Right ventricle myocardium inferior (tissue), 1 donor: ENCODE measurements at regions of chr11 and their contacts with region 1.

Region 1: GRCh38 chr11:76152086-76152681 is 54.1 kb downstream of the WNT11 start:
- DNase-seq: peak; percentile 95
- ATAC-seq: peak; percentile 91

Region 2: DNA sequence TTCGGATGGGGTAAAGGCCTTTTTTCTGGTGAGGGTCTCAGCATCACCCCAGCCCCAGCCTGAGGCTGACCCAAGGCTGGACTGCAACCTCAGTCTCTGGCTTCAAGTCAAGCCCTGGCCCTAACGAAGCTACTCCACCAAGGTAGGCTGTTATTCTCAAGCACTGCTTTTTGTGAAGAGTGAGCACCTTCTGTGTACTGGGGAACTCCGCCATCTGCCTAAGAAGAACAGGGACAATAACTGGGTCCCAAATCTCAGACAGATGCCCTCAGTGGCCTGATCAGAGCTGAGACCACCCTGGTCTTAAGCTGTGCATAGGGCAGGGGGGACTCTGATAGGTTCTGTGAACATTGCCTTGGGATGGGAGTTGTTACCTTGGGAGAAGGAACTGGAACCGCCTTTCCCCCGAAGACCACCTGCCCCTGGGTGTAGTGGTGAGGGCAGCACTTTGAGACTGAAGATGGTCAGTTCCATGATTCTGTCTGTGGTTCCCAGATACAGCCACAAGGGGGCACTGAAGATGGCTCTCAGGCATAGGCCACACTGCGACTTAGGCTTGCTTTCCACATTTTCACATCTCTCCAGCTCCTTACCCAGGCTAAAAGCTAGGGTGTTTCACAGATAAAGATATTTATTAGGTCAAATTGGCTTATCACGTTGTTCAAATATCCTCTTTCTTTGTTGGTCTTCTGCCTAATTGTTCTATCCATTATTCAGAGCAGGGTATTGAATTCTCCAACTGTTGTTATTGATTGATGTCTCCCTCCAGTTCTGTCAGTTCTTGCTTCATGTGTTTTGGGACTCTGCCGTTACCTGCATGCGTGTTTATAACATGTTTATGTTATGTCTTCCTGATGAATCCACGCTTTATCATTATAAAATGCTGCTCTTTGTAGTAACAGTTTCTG is 349.0 kb before region 1 on chr11:
- intact Hi-C with region 1: loop called (anchors 2 kb)
- DNase-seq: no peak
- ATAC-seq: peak; percentile 83

Region 3: GRCh38 chr11:75896843-75897419 is 255.3 kb before region 1 on chr11:
- intact Hi-C with region 1: loop called (anchors 1 kb)
- DNase-seq: no peak
- ATAC-seq: no peak

Region 4: GRCh38 chr11:76512851-76513653 is 360.9 kb after region 1 on chr11:
- intact Hi-C with region 1: no loop called
- DNase-seq: no peak
- ATAC-seq: no peak